ENCODE measurements at regions of chr5 and their contacts with region 1.

Region 1: GRCh38 chr5:55146543-55147151 is 13.3 kb upstream of the GPX8 start:
- DNase-seq: peak; percentile 76
- ATAC-seq: peak; percentile 79 to 93

Region 2: GRCh38 chr5:54905943-54906537 is 240.6 kb before region 1 on chr5:
- intact Hi-C with region 1: loop called in 1 of 2 experiments (anchors 2 kb)
- DNase-seq: peak; percentile 68
- ATAC-seq: no peak

Region 3: GRCh38 chr5:54944364-54944763 is 202.3 kb before region 1 on chr5:
- intact Hi-C with region 1: loop called (anchors 2 to 10 kb)
- DNase-seq: no peak
- ATAC-seq: no peak

Region 4: GRCh38 chr5:55102348-55102747 is 44.3 kb before region 1 on chr5 and contains the start of gene GZMA:
- intact Hi-C with region 1: no loop called
- DNase-seq: no peak
- ATAC-seq: no peak
- total RNA-seq, gene GZMA: 0.37 to 3.1 TPM

Region 5: GRCh38 chr5:55211157-55211839 is 64.7 kb after region 1 on chr5:
- intact Hi-C with region 1: no loop called
- DNase-seq: no peak
- ATAC-seq: no peak